ENCODE measurements at regions of chr4 and their contacts with region 1.

Region 1: DNA sequence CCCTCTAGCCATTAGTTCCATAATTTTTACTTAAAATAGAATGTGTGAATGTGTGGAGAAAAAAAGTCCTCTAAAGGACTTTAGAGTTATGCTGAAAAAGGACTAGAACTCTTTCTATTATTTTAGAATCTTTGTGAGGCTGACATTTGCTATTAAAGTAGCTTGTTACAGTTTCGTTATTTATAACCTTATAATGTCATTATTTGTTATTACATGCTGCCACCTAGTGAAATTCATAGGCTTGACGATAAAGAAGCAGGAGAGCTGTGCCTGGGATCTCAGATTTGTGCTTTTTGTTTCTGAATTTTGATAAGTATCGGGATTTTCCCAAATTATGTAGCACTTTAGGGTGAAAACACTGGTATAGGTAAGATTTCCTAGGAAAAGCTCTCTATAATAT is 38.5 kb upstream of the TAPT1 start:
- DNase-seq: peak; percentile 29 to 67 (median 48)
- H3K4me3 ChIP-seq: no peak overlapping the region
- H3K4me3 Mint-ChIP-seq: no peak overlapping the region
- H3K27ac ChIP-seq: no peak overlapping the region
- H3K27ac Mint-ChIP-seq: no peak overlapping the region
- H3K4me1 ChIP-seq: peaks cover 9 to 11% of the 10 kb centered on the region in 2 donors
- H3K4me1 Mint-ChIP-seq: peaks cover 16% of the 10 kb centered on the region
- H3K27me3 ChIP-seq: no peaks in the 10 kb centered on the region
- H3K27me3 Mint-ChIP-seq: no peaks in the 10 kb centered on the region
- CTCF ChIP-seq: peak; percentile 75

Region 2: GRCh38 chr4:16026160-16026761 is 238.5 kb before region 1 on chr4:
- intact Hi-C with region 1: loop called (anchors 2 to 5 kb)
- DNase-seq: peak; percentile 38 to 66 (median 51)
- H3K4me3 ChIP-seq: no peak overlapping the region
- H3K4me3 Mint-ChIP-seq: no peak overlapping the region
- H3K27ac ChIP-seq: no peak overlapping the region
- H3K27ac Mint-ChIP-seq: no peak overlapping the region
- H3K4me1 ChIP-seq: peaks cover 0 to 4% of the 10 kb centered on the region in 2 donors
- H3K4me1 Mint-ChIP-seq: peaks cover 10% of the 10 kb centered on the region
- H3K27me3 ChIP-seq: no peaks in the 10 kb centered on the region
- H3K27me3 Mint-ChIP-seq: no peaks in the 10 kb centered on the region
- CTCF ChIP-seq: peak; percentile 84

Region 3: DNA sequence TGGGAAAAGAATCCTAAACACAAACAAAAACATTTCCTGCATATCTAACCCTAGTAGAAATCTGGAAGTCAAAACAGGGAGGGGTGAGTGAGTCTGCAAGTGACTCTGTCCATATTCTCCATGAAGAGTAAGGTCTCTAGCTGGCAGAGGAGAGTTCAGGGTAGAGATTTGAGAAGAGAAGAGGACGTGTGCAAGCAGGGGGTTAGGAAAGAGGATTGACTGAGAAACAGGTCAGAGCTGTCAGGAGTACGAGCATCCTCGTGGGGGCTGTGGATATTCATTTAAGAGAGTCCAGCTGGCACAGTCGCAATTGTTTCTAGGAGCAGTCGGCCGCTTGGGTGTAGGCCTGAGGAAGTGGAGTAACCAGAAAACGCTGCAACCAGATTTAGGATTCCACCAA is 208.9 kb before region 1 on chr4:
- intact Hi-C with region 1: no loop called
- DNase-seq: no peak
- H3K4me3 ChIP-seq: peak overlapping the region in 2 of 3 experiments; percentile 25 to 39
- H3K4me3 Mint-ChIP-seq: peak overlapping the region; percentile 61 to 94
- H3K27ac ChIP-seq: no peak overlapping the region
- H3K27ac Mint-ChIP-seq: peak overlapping the region in 6 of 7 donors; percentile 13 to 80 (median 40)
- H3K4me1 ChIP-seq: peaks cover 20 to 25% of the 10 kb centered on the region in 2 donors
- H3K4me1 Mint-ChIP-seq: peaks cover 32% of the 10 kb centered on the region
- H3K27me3 ChIP-seq: no peaks in the 10 kb centered on the region
- H3K27me3 Mint-ChIP-seq: peaks cover 0 to 4% (median 0%) of the 10 kb centered on the region in 3 donors
- CTCF ChIP-seq: no peak

Region 4: DNA sequence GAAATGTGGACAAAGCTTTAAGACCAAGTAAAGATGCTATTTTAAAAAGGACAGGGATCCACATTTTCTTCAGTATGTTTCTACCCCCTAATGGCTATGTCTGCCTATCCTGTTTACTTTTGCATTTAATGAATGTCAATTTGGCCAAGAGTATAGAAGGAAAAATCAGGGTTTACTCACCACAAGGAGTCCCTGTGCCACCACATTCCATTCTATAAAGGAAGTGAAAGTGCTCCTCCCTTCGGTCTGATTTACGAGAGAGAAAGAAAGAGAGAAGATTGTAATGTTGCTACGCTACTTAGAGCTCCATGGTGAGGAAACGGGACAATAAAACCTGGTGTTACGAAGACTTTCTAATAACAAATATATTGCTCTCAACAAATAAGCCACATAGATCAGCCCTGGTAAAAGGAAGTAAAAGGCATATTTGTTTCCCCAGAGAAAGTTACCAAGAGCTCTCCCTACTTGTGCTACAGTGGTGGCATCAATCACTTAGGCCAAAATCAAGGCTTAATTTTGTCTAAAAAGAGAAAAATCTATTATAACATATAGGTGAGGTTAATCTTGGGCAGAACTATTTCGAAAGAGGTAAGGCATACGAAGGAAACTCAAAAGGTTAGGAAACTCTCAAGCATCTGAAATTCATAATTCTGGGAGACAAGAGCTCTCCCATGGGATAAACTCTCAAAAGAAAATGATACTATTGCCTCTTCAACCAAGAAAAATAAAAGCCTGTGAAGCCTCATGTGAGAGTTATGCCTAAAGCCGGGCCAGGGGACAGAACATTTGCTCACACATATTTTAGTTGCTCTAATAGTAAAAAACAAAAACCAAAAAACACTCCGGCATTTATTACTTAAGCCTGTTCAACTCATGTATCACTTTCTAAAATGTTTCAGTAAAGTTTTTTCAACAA is 68.1 kb before region 1 on chr4:
- intact Hi-C with region 1: loop called (anchors 5 to 10 kb)
- DNase-seq: peak; percentile 43 to 72 (median 65)
- H3K4me3 ChIP-seq: peak overlapping the region; percentile 6 to 59 (median 41)
- H3K4me3 Mint-ChIP-seq: peak overlapping the region; percentile 63 to 85
- H3K27ac ChIP-seq: peak overlapping the region in 1 of 2 donors; percentile 66
- H3K27ac Mint-ChIP-seq: peak overlapping the region; percentile 55 to 88 (median 83)
- H3K4me1 ChIP-seq: peaks cover 30 to 32% of the 10 kb centered on the region in 2 donors
- H3K4me1 Mint-ChIP-seq: peaks cover 34% of the 10 kb centered on the region
- H3K27me3 ChIP-seq: no peaks in the 10 kb centered on the region
- H3K27me3 Mint-ChIP-seq: no peaks in the 10 kb centered on the region
- CTCF ChIP-seq: peak; percentile 49

Measured in CD14-positive monocyte (primary cell).